ENCODE measurements at regions of chr3 and their contacts with region 1.

Region 1: DNA sequence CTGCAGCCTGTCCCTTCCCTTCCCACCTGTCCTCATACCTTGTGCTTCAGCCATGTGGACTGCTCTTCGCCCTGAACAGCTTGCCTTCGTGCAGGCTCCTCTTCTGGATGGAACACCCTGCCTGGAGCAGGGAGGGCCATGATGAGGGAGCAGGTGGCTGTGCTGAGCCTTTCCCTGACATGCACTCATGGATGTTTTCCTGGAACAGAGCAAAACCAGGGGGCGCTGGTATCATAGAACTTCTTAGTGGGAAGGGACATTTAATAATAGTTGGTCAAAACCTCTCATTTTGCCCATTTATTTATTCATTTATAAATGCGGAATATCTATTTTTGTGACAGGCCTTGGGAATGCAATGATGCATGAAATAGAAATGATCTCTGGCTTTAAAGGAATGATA is 149.3 kb downstream of the CACNA1D start:
- DNase-seq: no peak
- ATAC-seq: no peak
- H3K4me3 ChIP-seq: no peak overlapping the region
- H3K27ac ChIP-seq: no peak overlapping the region
- H3K4me1 ChIP-seq: no peaks in the 10 kb centered on the region
- H3K27me3 ChIP-seq: peaks cover 74% of the 10 kb centered on the region
- CTCF ChIP-seq: peak; percentile 39; the same call in 1 of the 2 replicates

Region 2: DNA sequence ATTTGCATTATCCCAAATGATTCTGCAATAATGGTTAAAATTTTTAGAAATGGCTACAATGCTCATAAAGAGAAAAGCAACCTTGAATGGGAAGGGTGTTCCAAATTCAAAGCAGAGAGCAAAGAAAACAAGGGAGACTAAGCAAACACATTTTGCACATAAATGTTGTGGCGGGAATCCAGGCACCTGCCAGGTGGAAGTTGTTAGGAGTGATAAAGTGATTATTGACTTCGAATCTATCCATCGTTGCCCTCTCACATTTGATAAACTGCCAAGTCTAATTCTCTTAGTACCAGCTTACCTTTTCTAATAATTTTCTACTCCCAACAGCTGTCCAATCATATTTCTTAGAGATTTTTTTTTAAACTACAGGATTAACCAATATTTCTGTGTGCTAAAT is 723.1 kb after region 1 on chr3:
- CTCF ChIA-PET with region 1: interaction called, 10 read pairs
- POLR2A ChIA-PET with region 1: no interaction called
- intact Hi-C with region 1: no loop called
- DNase-seq: no peak
- ATAC-seq: no peak
- H3K4me3 ChIP-seq: no peak overlapping the region
- H3K27ac ChIP-seq: no peak overlapping the region
- H3K4me1 ChIP-seq: no peaks in the 10 kb centered on the region
- H3K27me3 ChIP-seq: peaks cover 36% of the 10 kb centered on the region
- CTCF ChIP-seq: no peak